Right ventricle myocardium inferior (tissue), 1 donor: ENCODE measurements at regions of chr2 and their contacts with region 1.

Region 1: GRCh38 chr2:73926493-73927338 is at the start of gene DGUOK:
- DNase-seq: peak; percentile 99
- ATAC-seq: peak; percentile 100
- total RNA-seq, gene DGUOK: 17.9 TPM

Region 2: DNA sequence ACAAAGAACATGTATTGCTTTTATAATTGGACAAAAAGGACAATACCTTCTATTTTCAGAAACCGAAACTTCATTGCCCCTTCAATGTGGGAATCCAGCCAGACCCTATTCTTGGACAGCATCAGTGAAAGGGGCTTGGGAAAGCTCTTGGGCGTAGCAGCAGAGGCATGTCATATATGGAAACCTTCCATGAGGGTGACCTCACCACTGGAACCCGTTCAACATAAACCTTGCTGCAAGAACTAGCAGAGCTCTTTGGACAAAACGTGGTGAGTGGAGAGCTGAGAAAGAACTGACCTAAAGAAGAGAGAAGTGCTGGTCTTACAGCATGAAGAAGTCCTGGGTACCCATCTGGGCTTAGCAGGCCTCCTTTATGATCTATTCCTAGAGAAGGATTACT is 56.6 kb before region 1 on chr2:
- intact Hi-C with region 1: loop called (anchors 5 kb)
- DNase-seq: no peak
- ATAC-seq: peak; percentile 88

Region 3: DNA sequence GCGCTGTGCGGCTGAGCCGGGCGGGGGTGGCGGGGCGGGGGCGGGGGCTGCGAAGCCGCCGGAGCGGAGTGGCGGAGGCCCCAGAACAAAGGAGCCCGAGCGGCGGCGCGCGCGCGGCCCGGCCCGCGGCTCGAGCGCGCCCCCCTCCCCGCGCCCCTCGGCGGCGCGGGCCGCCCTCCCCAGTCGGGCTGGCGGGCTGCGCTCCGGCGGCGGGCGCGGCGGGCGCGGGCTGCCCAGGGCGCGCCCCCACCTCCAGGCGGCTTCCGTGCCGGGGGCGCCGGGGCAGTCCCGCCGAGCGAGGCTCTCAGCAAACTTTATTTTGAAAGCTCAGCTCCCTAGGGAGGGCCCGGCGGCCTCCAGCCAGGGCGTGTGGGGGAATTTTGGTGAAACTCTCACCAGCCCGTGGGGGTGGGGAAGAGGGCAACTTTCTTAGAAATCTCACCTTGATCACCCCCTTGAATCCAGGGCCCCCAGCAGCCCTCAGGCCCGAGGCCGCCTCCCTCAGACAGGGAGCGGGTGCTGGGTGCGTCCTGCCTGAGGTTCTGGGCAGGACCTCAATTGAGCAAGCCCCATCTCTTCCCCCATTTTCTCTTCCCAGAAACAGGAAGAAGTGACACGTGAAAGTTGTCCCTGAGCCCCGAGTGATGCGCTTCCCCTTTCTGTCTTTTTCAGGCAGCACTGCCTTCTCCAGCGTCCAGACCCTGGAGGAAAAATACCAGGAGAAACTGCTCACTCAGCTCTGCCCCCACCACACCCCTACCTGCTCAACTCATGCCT is 58.8 kb after region 1 on chr2:
- intact Hi-C with region 1: loop called (anchors 5 kb)
- DNase-seq: peak; percentile 80
- ATAC-seq: peak; percentile 38

Region 4: GRCh38 chr2:74002487-74003391 is 76.0 kb after region 1 on chr2:
- intact Hi-C with region 1: loop called (anchors 5 kb)
- DNase-seq: peak; percentile 93
- ATAC-seq: peak; percentile 99

Region 5: GRCh38 chr2:74147727-74148456 is 221.2 kb after region 1 on chr2 and contains the start of gene BOLA3:
- intact Hi-C with region 1: loop called (anchors 10 kb)
- DNase-seq: peak; percentile 93
- ATAC-seq: peak; percentile 95
- total RNA-seq, gene BOLA3: 88.4 TPM